Activated T-helper 1 cell treated with anti-CD3 and anti-CD28 coated beads, Interleukin-12 subunit alpha, Interleukin-12 subunit beta, Interleukin-2, Interleukin-4 antibody, amounts not matched to agents 30 ng/mL and 10 ng/mL and 1 ng/mL, durations not matched to agents 14 hours and 24 hours and 36 hours (primary cell): ENCODE measurements at regions of chr1 and their contacts with region 1.

Region 1: DNA sequence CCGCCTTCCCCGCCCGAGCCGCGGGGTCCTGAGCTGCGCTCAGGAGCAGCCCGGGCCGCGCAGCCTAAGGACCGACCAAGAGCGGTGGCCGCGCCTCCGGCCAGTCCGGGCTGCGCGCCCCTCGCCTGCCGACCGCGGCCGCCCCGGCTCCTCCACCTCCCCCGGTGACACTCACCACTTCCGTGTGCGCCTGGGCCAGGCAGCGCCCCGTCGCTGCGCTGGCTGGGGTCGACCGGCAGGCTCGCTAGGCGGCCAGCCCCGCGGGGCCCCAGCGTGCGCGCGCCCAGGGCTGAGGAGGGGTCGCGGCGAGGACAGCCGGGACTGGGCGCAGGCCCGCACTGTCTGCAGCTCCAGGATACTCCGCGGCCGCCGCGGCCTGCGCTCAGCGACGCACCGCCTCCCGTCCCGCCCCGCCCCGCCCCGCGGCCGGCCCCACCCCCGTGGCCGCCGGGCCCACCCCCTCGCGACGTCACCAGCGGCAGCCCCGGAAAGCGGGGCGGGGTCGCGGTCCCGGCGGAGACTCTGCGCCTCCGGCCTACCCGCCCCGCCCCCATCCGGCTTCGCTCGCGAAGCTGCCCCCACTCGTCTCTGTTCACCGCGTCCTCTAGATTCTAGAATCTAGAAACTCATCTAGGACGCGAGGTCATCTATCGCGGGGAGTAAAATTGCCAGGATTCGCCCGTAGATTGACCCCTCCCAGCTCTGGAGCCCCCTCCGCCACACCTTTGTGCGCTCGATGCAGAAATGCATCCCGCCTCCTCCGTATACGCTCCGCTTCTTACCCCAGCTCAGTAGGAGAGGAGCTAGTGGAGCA is at the start of gene JAK1:
- DNase-seq: peak; percentile 81
- H3K4me3 Mint-ChIP-seq: peak within 1 kb of the TSS; percentile 93
- H3K27ac Mint-ChIP-seq: peak within 1 kb of the TSS; percentile 88
- H3K4me1 Mint-ChIP-seq: peaks cover 55% of the 10 kb centered on the region
- H3K27me3 Mint-ChIP-seq: peaks cover 2% of the 10 kb centered on the region
- total RNA-seq, gene JAK1: 102 TPM in 2 replicates

Region 2: GRCh38 chr1:63522891-63523728 is 1443.3 kb before region 1 on chr1 and contains the starts of genes EFCAB7 and ITGB3BP:
- intact Hi-C with region 1: loop called (anchors 1 kb)
- DNase-seq: peak; percentile 80
- H3K4me3 Mint-ChIP-seq: peak within 1 kb of the TSS; percentile 99
- H3K27ac Mint-ChIP-seq: peak within 1 kb of the TSS; percentile 94
- H3K4me1 Mint-ChIP-seq: peaks cover 53% of the 10 kb centered on the region
- H3K27me3 Mint-ChIP-seq: no peaks in the 10 kb centered on the region
- total RNA-seq, gene EFCAB7: 6.4 and 6.7 TPM in 2 replicates
- total RNA-seq, gene ITGB3BP: 44.1 and 49.8 TPM in 2 replicates

Region 3: DNA sequence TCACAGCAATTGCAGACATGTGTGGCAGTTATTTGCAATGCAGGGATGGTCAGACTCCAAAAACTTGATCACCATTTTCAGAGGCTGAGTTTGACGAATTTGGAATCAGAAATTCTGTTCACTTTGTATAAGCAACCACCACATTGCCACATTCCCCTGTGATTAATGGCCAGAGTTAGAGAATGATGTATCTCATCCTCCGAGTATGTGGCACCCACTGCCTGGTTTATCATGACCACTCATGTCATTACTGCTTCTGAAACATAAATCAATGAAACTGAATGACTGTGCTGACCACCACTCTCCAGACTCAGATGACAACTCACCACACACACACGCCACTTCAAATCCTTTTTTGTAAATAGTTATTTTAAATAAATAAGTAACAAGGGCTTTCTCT is 563.0 kb before region 1 on chr1:
- intact Hi-C with region 1: no loop called
- DNase-seq: no peak
- H3K4me3 Mint-ChIP-seq: no peak overlapping the region
- H3K27ac Mint-ChIP-seq: no peak overlapping the region
- H3K4me1 Mint-ChIP-seq: no peaks in the 10 kb centered on the region
- H3K27me3 Mint-ChIP-seq: peaks cover 4% of the 10 kb centered on the region

Region 4: GRCh38 chr1:64505232-64505943 is 461.0 kb before region 1 on chr1:
- intact Hi-C with region 1: loop called (anchors 10 kb)
- DNase-seq: no peak
- H3K4me3 Mint-ChIP-seq: peak overlapping the region; percentile 86
- H3K27ac Mint-ChIP-seq: no peak overlapping the region
- H3K4me1 Mint-ChIP-seq: peaks cover 17% of the 10 kb centered on the region
- H3K27me3 Mint-ChIP-seq: peaks cover 25% of the 10 kb centered on the region

Region 5: GRCh38 chr1:64864018-64864940 is 102.1 kb before region 1 on chr1:
- intact Hi-C with region 1: loop called (anchors 2 kb)
- DNase-seq: peak; percentile 16
- H3K4me3 Mint-ChIP-seq: no peak overlapping the region
- H3K27ac Mint-ChIP-seq: peak overlapping the region; percentile 41
- H3K4me1 Mint-ChIP-seq: peaks cover 25% of the 10 kb centered on the region
- H3K27me3 Mint-ChIP-seq: no peaks in the 10 kb centered on the region

Region 6: DNA sequence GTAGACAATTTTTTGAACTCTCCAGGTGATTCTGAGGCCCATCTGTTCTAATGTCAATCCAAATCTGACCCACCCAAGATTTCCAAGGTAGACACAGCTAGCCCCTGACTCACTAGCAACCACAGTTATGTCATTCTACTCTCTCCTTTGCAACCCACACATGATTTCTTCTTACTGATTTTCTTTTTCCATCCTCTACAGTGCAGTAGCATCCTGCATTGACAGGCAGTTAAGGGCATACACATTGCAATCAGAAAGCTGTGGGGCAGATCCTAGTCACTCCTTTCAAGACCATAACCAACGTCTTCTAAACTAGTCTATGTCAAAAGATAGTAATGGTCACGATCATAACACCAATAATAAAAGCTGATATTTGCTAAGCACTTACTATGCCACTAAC is 54.2 kb before region 1 on chr1:
- intact Hi-C with region 1: loop called (anchors 1 kb)
- DNase-seq: no peak
- H3K4me3 Mint-ChIP-seq: no peak overlapping the region
- H3K27ac Mint-ChIP-seq: peak overlapping the region; percentile 20
- H3K4me1 Mint-ChIP-seq: peaks cover 61% of the 10 kb centered on the region
- H3K27me3 Mint-ChIP-seq: no peaks in the 10 kb centered on the region

Region 7: DNA sequence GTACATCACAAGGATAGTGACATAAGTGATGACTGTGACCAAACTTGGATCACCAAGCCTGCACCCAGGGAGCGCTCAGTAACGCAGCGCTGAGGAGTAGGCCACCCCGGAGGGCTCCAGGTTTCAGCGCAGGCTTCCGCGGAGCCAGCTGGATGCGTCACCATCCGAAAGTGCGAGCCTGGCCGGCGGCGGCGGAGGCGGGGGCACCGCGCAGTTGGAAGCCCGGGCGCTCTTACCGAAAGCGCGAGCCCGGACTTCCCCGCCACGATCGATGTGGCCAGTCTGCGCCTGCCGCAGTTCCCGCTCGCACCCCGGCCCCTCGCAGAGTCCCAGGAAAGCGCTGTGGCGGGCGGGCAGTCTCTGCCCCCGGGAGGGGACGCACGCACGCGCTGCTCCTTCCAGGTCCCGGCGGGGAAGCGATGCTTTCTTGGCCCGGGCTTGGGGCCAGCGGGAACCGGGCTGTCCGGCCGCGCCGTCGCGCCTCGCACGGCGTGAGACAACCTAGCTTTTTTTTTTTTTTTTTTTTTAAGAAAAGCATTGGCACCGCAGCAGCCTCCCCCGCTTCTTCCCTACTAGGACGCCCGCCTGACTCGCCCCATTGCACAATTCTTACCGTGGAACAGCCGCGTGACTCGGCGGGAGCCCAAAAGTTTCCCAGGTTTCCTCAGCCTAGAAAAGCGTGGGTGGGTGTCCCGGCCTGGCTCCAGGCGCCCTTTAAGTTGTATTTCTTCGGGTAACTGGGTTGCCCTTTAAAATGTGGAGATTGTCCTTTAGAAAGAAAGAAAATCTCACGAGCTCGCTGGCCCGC is 36.3 kb after region 1 on chr1:
- intact Hi-C with region 1: loop called (anchors 1 kb)
- DNase-seq: peak; percentile 58
- H3K4me3 Mint-ChIP-seq: peak overlapping the region; percentile 74
- H3K27ac Mint-ChIP-seq: peak overlapping the region; percentile 25
- H3K4me1 Mint-ChIP-seq: peaks cover 25% of the 10 kb centered on the region
- H3K27me3 Mint-ChIP-seq: peaks cover 23% of the 10 kb centered on the region

Region 8: DNA sequence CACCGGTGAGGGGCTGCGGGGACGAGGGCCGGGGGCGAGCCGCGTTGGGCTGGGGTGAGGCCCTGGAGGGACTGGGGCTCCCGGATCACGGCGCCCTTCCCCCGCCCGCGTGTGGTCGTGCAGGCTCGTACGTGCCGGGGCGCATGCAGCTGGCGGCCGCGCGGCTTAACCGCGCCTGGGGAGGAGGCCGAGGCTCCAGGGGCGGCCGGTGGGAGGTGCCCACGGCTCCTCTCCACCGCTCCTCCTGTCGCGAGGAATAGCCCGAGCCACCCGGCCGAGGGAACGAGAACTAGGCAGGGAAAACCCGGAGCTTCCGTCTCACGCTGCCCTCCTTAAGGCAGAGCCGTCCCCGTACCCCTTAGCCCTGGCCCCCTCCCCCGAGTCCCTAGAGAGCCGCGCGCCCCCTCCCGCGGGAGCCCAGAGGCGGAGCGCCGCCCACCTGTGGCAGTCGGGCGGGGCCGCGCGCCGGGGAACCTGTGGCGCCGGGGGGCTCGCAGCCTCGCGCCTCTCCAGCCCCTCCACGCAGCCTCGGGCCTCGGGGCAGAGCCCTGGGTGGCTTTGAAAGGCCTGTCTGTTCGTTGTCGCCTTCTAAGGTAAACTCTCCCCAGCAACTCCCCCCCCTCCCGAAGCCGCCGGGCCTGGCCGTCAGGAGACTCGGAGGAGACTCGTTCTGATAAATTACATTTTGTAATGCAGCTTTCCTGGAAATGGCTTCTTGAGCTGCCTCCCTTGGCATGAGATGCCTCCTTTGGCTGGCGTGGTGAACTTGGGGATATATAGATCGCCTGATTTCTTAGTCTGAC is 182.4 kb after region 1 on chr1:
- intact Hi-C with region 1: loop called (anchors 5 kb)
- DNase-seq: peak; percentile 55
- H3K4me3 Mint-ChIP-seq: peak overlapping the region; percentile 94
- H3K27ac Mint-ChIP-seq: peak overlapping the region; percentile 90
- H3K4me1 Mint-ChIP-seq: peaks cover 52% of the 10 kb centered on the region
- H3K27me3 Mint-ChIP-seq: peaks cover 7% of the 10 kb centered on the region